ENCODE measurements at regions of chr1 and their contacts with region 1.

Region 1: DNA sequence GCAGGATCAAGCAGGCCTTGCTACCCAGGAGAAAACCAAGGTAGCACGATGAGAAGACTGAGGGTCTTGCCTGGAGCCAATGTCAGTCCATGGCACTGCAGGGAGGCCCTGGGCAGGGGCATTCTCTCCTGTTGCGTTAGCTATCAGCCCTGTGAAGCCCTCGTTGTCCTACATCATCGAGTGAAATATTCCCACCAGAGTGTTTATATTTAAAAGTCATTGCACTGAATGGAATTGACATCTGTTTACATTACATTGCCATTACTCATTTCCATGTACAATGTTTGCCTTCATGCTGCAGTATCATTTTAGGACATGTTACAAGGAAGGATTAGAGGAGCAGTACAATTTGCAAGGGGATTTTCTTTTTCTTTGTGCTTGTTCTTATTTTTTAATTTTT is 243.9 kb downstream of the KAZN start:
- DNase-seq: no peak
- H3K4me3 ChIP-seq: no peak overlapping the region
- H3K27ac ChIP-seq: no peak overlapping the region
- H3K4me1 ChIP-seq: no peaks in the 10 kb centered on the region
- H3K27me3 ChIP-seq: no peaks in the 10 kb centered on the region
- CTCF ChIP-seq: no peak
- POLR2A ChIP-seq: no peak

Region 2: GRCh38 chr1:14270821-14271220 is 571.5 kb before region 1 on chr1:
- intact Hi-C with region 1: loop called (anchors 5 kb)
- DNase-seq: no peak
- H3K4me3 ChIP-seq: no peak overlapping the region
- H3K27ac ChIP-seq: no peak overlapping the region
- H3K4me1 ChIP-seq: no peaks in the 10 kb centered on the region
- H3K27me3 ChIP-seq: no peaks in the 10 kb centered on the region
- CTCF ChIP-seq: no peak
- POLR2A ChIP-seq: no peak

Region 3: DNA sequence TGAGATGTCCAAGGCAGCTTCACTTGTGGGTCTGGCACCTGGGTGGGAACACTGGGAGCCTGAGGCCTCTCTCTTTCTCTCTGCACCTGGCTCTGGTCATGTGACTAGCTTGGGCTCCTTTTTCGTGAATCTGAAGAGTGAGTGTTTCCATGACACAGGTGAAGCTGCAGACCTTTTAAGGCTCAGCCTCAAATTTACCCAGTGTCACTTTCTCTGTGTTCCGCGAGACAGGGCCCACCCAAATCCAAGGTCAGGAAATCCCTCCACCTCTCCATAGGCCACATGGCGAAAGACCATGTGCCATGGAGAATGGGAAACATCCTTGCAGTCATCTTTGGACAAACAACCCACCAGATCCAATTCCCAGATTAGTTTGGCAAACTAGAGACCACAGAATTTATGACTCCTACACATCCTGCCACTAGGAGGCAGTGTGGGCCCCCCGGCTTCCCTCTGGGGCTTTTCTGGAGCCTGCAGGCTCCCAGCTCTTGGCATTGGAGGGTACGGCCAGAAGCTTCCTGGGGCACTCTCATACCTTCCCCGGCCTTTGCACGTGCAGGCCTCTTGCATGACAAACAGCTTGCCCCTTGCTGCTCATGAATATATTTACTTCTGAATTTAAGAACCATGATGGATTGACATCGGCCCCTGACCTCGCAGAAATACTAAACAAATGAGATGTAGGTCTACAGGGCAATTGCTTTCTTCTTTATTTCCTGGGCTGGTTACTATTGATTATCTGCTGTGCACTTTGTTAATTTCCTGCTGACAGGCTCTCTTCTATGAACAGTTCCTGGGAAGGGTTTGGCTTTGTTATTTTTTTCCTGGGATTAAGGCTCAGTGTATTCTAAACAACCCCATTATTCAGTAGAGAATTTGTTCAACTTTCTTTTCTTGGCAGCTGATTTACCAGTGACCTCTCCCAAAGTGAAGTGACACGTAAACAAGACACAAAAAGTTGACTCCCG is 63.2 kb before region 1 on chr1:
- intact Hi-C with region 1: no loop called
- DNase-seq: no peak
- H3K4me3 ChIP-seq: no peak overlapping the region
- H3K27ac ChIP-seq: no peak overlapping the region
- H3K4me1 ChIP-seq: no peaks in the 10 kb centered on the region
- H3K27me3 ChIP-seq: no peaks in the 10 kb centered on the region
- CTCF ChIP-seq: peak in 2 of 3 donors; percentile 15 to 28
- POLR2A ChIP-seq: no peak

Region 4: DNA sequence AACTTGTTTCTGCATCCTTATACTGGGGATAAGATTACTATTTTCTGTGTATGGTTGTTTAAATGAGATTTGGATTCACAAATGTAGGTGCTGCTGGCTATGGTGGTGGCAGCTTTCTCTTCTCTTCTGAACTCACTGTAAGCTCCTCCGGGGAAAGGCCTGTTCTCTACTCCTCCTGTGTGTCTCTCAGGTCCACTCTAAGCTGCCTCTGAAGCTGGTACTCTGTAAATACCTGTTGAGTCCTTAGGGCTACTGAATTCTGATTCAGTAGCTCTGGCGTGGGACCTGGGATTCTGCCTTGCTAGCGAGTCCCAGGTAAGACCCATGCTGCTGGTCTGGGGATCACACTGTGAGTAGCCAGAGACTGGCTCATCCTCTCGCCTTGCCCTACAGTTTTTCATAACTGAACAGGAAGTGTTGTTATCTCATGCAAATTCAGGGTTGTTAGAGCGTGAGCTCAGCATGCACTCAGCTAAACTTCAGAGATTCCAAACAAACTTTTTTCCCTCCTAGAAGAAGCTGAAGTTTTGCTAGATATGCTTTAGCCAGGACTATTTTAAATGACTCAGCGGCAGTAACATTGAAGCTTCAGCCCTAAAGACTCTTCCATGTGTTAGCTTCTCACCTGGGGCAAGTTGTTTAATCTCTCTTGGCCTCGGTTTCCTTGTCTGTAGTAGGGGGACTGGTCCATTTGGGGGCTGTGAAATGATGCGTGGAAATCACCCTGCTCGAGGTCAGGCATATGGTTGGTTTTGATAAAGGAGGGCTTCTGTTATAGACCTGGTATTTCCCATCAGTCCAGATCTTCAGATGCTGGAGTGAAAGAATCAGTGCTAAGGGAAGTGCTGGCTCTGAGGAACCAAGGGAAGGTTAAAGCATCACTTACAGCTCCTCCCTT is 39.7 kb after region 1 on chr1:
- intact Hi-C with region 1: no loop called
- DNase-seq: no peak
- H3K4me3 ChIP-seq: no peak overlapping the region
- H3K27ac ChIP-seq: no peak overlapping the region
- H3K4me1 ChIP-seq: no peaks in the 10 kb centered on the region
- H3K27me3 ChIP-seq: no peaks in the 10 kb centered on the region
- CTCF ChIP-seq: no peak
- POLR2A ChIP-seq: no peak

Measured in breast epithelium (tissue), 4 donors.